Activated CD4-positive, alpha-beta memory T cell treated with anti-CD3 and anti-CD28 coated beads for 36 hours (primary cell): ENCODE measurements at regions of chr15 and their contacts with region 1.

Region 1: GRCh38 chr15:57527382-57528091 is 64.2 kb upstream of the MYZAP start:
- DNase-seq: no peak
- H3K4me3 Mint-ChIP-seq: no peak overlapping the region
- H3K27ac Mint-ChIP-seq: no peak overlapping the region
- H3K4me1 Mint-ChIP-seq: no peaks in the 10 kb centered on the region
- H3K27me3 Mint-ChIP-seq: peaks cover 3% of the 10 kb centered on the region

Region 2: DNA sequence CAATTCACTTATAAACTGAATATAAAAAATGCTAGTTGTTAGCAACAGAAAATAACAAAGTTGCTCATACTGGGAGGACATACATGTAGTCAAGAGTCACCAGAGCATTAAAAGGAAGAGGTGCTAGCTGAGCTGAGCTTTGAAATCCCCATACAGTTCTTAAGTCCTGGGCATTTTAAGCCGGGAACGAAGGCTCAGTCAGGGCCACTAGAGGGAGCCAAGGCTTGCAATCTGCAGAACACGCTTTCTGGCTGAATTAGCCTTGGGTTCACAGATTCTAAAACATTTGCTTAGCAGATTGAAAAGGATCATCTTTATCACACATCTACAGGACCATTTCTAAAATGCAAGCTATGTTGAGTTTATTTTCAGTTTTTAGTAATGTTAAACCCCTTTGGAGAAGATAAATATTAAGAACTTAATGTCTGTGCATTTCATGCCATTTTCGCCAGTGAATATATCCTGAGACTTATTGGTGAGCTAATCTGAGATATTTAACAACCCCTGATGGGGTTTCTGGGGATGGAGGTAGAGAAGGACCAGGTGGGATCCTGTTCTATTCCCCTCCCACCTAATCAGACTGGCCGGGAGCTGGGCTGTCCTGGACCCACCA is 1036.3 kb before region 1 on chr15:
- CTCF ChIA-PET with region 1: interaction called, 8 read pairs
- POLR2A ChIA-PET with region 1: no interaction called
- intact Hi-C with region 1: loop called (anchors 10 kb)
- DNase-seq: peak; percentile 69
- H3K4me3 Mint-ChIP-seq: no peak overlapping the region
- H3K27ac Mint-ChIP-seq: no peak overlapping the region
- H3K4me1 Mint-ChIP-seq: no peaks in the 10 kb centered on the region
- H3K27me3 Mint-ChIP-seq: peaks cover 2% of the 10 kb centered on the region

Region 3: DNA sequence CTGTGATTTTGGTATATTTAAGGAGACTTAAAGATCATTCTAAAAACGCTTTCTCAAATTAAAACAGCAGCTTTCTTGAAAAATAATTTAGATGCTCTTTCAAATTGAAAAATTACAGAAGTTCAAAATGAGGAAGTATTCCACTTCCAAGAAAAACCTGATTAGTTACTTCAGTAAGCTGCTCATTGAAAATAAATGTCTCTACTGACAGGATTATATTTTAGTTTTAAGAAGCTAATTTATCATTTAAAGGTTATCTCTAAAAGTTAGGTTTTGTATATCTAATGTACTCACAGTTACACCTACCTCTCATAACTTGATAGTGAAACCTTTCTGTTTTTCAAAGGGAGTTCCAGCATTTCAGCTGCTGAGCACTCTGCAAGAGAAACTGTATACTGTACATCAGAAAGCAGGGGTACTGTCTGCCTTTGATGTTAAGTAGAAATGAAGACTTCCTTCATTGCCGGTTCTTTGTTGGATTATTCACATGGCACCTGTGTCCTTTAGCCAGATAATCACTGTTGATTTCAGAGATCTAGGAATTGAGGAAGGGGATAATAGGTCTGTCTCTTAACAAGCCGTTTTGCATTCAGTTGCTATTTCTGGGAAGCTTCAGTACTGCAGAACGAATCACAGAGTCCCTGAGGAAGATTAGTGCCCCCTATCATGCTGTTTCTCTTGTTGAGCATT is 447.5 kb before region 1 on chr15:
- CTCF ChIA-PET with region 1: no interaction called
- POLR2A ChIA-PET with region 1: no interaction called
- intact Hi-C with region 1: no loop called
- DNase-seq: no peak
- H3K4me3 Mint-ChIP-seq: no peak overlapping the region
- H3K27ac Mint-ChIP-seq: no peak overlapping the region
- H3K4me1 Mint-ChIP-seq: peaks cover 20% of the 10 kb centered on the region
- H3K27me3 Mint-ChIP-seq: no peaks in the 10 kb centered on the region

Region 4: GRCh38 chr15:57340682-57341259 is 186.8 kb before region 1 on chr15:
- CTCF ChIA-PET with region 1: interaction called, 164 read pairs
- POLR2A ChIA-PET with region 1: interaction called, 3 read pairs
- intact Hi-C with region 1: loop called (anchors 1 kb)
- DNase-seq: peak; percentile 53
- H3K4me3 Mint-ChIP-seq: no peak overlapping the region
- H3K27ac Mint-ChIP-seq: no peak overlapping the region
- H3K4me1 Mint-ChIP-seq: no peaks in the 10 kb centered on the region
- H3K27me3 Mint-ChIP-seq: peaks cover 8% of the 10 kb centered on the region

Region 5: DNA sequence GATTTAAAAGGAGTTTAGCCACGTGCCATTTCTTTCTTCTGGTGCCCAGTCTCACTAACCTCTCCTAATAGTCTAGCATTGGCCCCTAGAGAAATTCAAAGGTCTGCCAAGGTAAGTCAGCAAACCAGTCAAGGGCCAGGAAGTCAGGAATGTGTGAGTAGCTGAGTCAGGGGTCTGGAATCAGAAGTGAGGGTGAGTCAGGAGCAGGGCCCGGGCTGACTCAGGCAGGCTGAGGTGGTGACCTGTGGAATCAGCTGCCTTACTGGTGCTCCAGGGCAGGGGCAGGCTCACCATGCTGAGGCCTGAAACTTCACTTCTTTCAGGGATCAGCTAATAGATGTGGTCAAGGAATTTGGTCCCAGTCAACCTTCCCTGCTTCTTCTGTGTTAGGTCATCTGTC is 41.7 kb before region 1 on chr15:
- CTCF ChIA-PET with region 1: no interaction called
- POLR2A ChIA-PET with region 1: no interaction called
- intact Hi-C with region 1: no loop called
- DNase-seq: no peak
- H3K4me3 Mint-ChIP-seq: no peak overlapping the region
- H3K27ac Mint-ChIP-seq: no peak overlapping the region
- H3K4me1 Mint-ChIP-seq: no peaks in the 10 kb centered on the region
- H3K27me3 Mint-ChIP-seq: peaks cover 25% of the 10 kb centered on the region

Region 6: GRCh38 chr15:57516327-57517031 is 11.1 kb before region 1 on chr15:
- CTCF ChIA-PET with region 1: interaction called, 10 read pairs
- POLR2A ChIA-PET with region 1: no interaction called
- intact Hi-C with region 1: no loop called
- DNase-seq: no peak
- H3K4me3 Mint-ChIP-seq: no peak overlapping the region
- H3K27ac Mint-ChIP-seq: no peak overlapping the region
- H3K4me1 Mint-ChIP-seq: no peaks in the 10 kb centered on the region
- H3K27me3 Mint-ChIP-seq: no peaks in the 10 kb centered on the region

Region 7: GRCh38 chr15:57541805-57542504 is 14.4 kb after region 1 on chr15:
- CTCF ChIA-PET with region 1: interaction called, 21 read pairs
- POLR2A ChIA-PET with region 1: no interaction called
- intact Hi-C with region 1: no loop called
- DNase-seq: peak; percentile 52
- H3K4me3 Mint-ChIP-seq: no peak overlapping the region
- H3K27ac Mint-ChIP-seq: no peak overlapping the region
- H3K4me1 Mint-ChIP-seq: peaks cover 6% of the 10 kb centered on the region
- H3K27me3 Mint-ChIP-seq: peaks cover 11% of the 10 kb centered on the region

Region 8: DNA sequence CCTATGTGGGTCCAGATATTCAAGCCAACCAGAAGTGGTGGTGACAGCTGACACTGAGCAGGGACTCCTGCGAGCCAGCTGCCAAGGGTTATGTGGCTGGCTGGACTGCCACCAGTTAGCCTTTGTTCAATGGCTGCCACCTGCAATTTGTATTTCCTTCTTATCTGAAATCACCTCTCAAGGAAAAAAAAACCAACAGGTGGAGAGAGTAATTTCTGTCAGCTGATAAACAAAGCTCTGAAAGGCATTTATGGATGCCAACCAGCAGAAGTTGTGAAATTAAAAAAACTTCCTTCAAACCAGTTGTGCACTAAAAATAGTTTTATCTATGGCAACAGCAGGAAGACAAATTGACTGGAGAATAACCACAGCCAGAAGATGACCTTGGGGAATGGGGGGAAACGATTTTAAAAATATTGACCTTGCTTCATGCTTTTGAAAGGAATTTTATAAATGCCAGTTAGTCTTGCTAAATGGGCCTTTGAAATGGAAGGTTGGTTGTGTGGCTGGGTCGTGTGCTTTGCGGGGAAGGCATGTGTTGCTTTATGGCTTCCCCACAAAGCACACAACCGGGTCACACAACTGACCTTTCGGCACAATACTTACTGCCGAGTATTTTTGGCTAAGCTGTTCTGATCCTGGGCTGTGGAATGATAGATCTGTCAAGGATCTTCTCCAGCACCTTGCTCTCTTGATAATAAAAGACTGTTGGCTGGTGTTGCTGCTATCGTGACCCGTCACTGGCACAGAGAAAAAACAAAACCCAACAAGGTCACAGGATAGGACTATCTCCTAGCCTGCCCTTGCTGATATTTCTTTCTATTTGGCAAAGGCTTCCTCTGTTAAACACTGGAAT is 67.7 kb after region 1 on chr15:
- CTCF ChIA-PET with region 1: no interaction called
- POLR2A ChIA-PET with region 1: no interaction called
- intact Hi-C with region 1: no loop called
- DNase-seq: no peak
- H3K4me3 Mint-ChIP-seq: no peak overlapping the region
- H3K27ac Mint-ChIP-seq: no peak overlapping the region
- H3K4me1 Mint-ChIP-seq: peaks cover 5% of the 10 kb centered on the region
- H3K27me3 Mint-ChIP-seq: peaks cover 18% of the 10 kb centered on the region